ENCODE measurements at regions of chr16 and their contacts with region 1.

Region 1: DNA sequence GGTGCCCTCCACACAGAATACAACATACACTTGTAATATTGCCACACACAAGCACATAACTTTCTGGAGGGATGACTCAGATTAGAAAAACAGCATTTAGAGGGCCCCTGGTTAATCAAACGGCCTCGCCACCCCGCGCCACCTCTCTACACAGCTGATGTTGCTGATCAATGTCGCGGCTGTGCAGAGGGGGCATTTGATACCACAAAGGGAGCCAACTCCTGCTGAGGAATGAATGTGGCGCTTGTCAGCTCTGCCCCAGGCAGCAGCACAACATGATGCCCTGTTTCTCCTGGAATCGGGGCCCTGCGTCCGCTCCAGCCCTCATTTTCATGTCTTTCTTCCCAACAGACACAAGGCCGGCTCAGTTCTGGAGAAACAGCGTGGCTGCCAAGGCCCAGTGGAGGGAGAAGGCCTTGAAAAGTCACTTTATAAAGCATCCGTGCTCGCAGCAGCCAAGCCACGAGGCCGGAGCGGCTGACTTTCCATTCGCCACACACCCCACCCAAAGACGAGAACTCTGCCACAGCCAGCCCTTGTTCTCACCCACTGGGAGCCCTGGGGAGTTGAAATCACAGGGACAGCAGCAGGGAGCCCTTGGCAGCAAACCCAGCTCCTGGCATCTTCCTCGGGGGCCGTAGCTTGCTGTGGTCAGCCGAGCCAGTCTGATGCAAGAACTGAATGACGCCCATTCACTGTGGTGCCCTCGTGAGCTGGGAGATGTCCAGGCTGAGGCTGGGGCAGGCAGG is 65.6 kb downstream of the XYLT1 start:
- DNase-seq: peak; percentile 50 to 77
- ATAC-seq: peak; percentile 76 to 81
- H3K4me3 ChIP-seq: peak overlapping the region in 3 of 4 donors; percentile 10 to 27 (median 18)
- H3K27ac ChIP-seq: peak overlapping the region; percentile 62 to 80 (median 64)
- H3K4me1 ChIP-seq: peaks cover 7 to 13% of the 10 kb centered on the region in 2 donors
- H3K27me3 ChIP-seq: no peaks in the 10 kb centered on the region
- CTCF ChIP-seq: no peak
- POLR2A ChIP-seq: peak in 1 of 2 donors; percentile 8

Region 2: GRCh38 chr16:17277977-17278381 is 127.1 kb before region 1 on chr16:
- in situ Hi-C with region 1: no loop called
- intact Hi-C with region 1: loop called (anchors 5 kb)
- DNase-seq: no peak
- ATAC-seq: no peak
- H3K4me3 ChIP-seq: no peak overlapping the region
- H3K27ac ChIP-seq: no peak overlapping the region
- H3K4me1 ChIP-seq: no peaks in the 10 kb centered on the region
- H3K27me3 ChIP-seq: no peaks in the 10 kb centered on the region
- CTCF ChIP-seq: peak in 3 of 5 experiments; percentile 33 to 41 (median 36)
- POLR2A ChIP-seq: no peak

Region 3: DNA sequence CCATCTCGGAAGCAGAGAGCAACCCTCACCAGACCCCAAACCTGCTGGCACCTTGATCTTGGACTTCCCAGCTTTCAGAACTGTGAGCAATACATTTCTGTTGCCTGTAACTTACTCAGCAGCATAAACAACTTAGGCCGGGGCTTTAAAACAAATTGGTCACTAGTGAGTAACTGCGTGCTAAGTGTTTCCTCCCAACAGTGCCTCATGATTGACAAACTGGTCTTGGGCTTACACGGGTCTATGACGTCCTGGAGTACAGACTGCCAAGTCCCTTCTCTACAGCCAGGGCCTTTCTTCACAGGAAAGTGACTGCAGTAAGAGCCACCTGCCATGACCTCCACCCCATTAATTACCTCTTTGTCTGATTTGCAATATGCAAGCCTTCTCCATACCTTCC is 71.0 kb before region 1 on chr16:
- in situ Hi-C with region 1: no loop called
- intact Hi-C with region 1: loop called (anchors 5 kb)
- DNase-seq: no peak
- ATAC-seq: peak in 1 of 2 donors; percentile 50
- H3K4me3 ChIP-seq: no peak overlapping the region
- H3K27ac ChIP-seq: no peak overlapping the region
- H3K4me1 ChIP-seq: peaks cover 8 to 13% of the 10 kb centered on the region in 2 donors
- H3K27me3 ChIP-seq: no peaks in the 10 kb centered on the region
- CTCF ChIP-seq: no peak
- POLR2A ChIP-seq: no peak

Region 4: GRCh38 chr16:17499223-17499902 is 94.2 kb after region 1 on chr16:
- in situ Hi-C with region 1: no loop called
- intact Hi-C with region 1: no loop called
- DNase-seq: no peak
- ATAC-seq: no peak
- H3K4me3 ChIP-seq: no peak overlapping the region
- H3K27ac ChIP-seq: no peak overlapping the region
- H3K4me1 ChIP-seq: no peaks in the 10 kb centered on the region
- H3K27me3 ChIP-seq: no peaks in the 10 kb centered on the region
- CTCF ChIP-seq: no peak
- POLR2A ChIP-seq: no peak

Measured in gastrocnemius medialis (tissue), 4 donors.